Mammary epithelial cell (primary cell): ENCODE measurements at regions of chr13 and their contacts with region 1.

Region 1: DNA sequence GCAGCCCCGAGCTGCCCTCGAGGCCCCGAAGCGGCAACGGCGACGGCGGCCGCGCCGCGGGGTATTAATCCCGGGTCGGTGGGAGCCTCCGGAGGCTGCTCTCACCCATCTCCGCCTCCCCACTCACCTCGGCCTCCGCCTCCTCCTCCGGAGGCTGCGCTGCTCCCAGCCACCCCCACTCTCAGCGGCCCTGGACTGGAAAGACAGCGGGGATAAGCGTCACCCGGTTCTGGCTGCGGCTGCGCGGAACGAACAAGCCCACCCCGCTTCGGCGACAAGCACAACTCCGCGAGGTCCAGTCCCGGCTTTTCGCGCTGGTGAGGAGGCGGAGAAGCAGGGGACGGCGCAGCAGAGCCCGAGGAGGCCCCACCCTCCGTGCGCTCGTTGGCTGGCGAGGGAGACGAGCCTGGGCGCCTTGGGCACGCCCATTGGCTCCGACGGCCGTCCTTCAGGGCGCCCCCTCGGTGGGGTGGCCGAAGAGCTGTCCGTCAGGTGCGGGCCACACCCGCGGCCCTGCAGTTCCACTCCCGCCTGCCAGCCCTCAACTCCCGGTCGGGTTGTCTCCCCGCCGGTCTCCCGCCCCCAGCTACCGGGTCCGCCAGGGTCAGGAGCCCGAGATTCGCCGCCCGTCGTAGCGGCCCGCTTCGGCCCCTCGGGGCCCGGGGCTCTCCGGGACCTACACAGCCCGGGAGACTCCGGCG is at the start of gene ZMYM5:
- DNase-seq: peak; percentile 99
- H3K4me3 ChIP-seq: peak within 1 kb of the TSS; percentile 64 to 75 (median 71)
- H3K27ac ChIP-seq: peak within 1 kb of the TSS; percentile 80
- H3K4me1 ChIP-seq: peaks cover 16% of the 10 kb centered on the region
- H3K27me3 ChIP-seq: no peaks in the 10 kb centered on the region
- CTCF ChIP-seq: no peak
- total RNA-seq, gene ZMYM5: 11.4 to 13.5 TPM

Region 2: GRCh38 chr13:19587635-19588300 is 275.7 kb before region 1 on chr13:
- CTCF ChIA-PET with region 1: no interaction called
- dilution Hi-C with region 1: no loop called
- in situ Hi-C with region 1: no loop called
- intact Hi-C with region 1: no loop called
- DNase-seq: peak; percentile 35
- H3K4me3 ChIP-seq: no peak overlapping the region
- H3K27ac ChIP-seq: no peak overlapping the region
- H3K4me1 ChIP-seq: no peaks in the 10 kb centered on the region
- H3K27me3 ChIP-seq: no peaks in the 10 kb centered on the region
- CTCF ChIP-seq: peak; percentile 29 to 56

Region 3: DNA sequence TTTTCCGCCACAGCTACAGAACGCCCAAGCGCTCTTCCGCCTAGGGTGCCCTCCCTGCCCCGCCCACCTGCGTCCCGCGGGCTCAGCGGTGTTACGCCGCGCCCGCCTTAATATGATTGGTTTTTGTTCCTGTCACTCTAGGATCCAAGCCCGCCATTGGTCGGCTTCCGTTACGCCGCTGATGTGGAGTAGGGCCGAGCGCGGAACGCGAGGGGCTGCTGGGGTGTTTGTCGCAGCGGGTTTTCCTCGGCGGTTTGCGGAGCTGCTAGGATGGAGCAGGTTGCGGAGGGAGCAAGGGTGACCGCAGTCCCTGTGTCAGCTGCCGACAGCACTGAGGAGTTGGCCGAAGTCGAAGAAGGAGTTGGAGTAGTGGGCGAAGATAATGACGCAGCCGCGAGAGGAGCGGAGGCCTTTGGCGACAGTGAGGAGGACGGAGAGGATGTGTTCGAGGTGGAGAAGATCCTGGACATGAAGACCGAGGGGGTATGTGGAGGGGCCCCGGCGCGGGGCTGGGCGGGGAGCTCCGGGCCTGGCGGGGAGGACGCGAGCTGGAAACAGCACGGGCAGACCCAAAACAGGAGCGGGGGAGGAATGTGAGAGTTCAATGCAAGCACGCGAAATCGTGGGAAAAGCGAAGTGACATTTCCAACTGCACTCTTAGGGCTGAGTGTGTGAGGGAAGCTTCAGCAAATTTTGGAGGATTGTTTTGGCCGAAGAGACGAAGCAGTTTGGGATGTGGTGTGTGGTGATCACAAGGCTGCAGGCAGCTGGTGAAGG is 229.8 kb before region 1 on chr13 and contains the start of gene MPHOSPH8:
- CTCF ChIA-PET with region 1: no interaction called
- dilution Hi-C with region 1: no loop called
- in situ Hi-C with region 1: no loop called
- intact Hi-C with region 1: loop called (anchors 2 kb)
- DNase-seq: peak; percentile 95
- H3K4me3 ChIP-seq: peak within 1 kb of the TSS; percentile 55 to 92 (median 75)
- H3K27ac ChIP-seq: peak within 1 kb of the TSS; percentile 33
- H3K4me1 ChIP-seq: no peaks in the 10 kb centered on the region
- H3K27me3 ChIP-seq: no peaks in the 10 kb centered on the region
- CTCF ChIP-seq: no peak
- total RNA-seq, gene MPHOSPH8: 10.0 to 27.3 TPM

Region 4: GRCh38 chr13:19742643-19743042 is 120.8 kb before region 1 on chr13:
- CTCF ChIA-PET with region 1: no interaction called
- dilution Hi-C with region 1: no loop called
- in situ Hi-C with region 1: no loop called
- intact Hi-C with region 1: loop called (anchors 10 kb)
- DNase-seq: no peak
- H3K4me3 ChIP-seq: no peak overlapping the region
- H3K27ac ChIP-seq: no peak overlapping the region
- H3K4me1 ChIP-seq: no peaks in the 10 kb centered on the region
- H3K27me3 ChIP-seq: no peaks in the 10 kb centered on the region
- CTCF ChIP-seq: no peak

Region 5: GRCh38 chr13:19782049-19782726 is 81.3 kb before region 1 on chr13:
- CTCF ChIA-PET with region 1: no interaction called
- dilution Hi-C with region 1: no loop called
- in situ Hi-C with region 1: no loop called
- intact Hi-C with region 1: loop called (anchors 2 kb)
- DNase-seq: peak; percentile 44
- H3K4me3 ChIP-seq: peak overlapping the region; percentile 80 to 98 (median 90)
- H3K27ac ChIP-seq: peak overlapping the region; percentile 92
- H3K4me1 ChIP-seq: peaks cover 3% of the 10 kb centered on the region
- H3K27me3 ChIP-seq: no peaks in the 10 kb centered on the region
- CTCF ChIP-seq: peak in 1 of 2 donors; percentile 6

Region 6: GRCh38 chr13:19822673-19823072 is 40.8 kb before region 1 on chr13:
- CTCF ChIA-PET with region 1: no interaction called
- dilution Hi-C with region 1: no loop called
- in situ Hi-C with region 1: no loop called
- intact Hi-C with region 1: no loop called
- DNase-seq: no peak
- H3K4me3 ChIP-seq: no peak overlapping the region
- H3K27ac ChIP-seq: no peak overlapping the region
- H3K4me1 ChIP-seq: no peaks in the 10 kb centered on the region
- H3K27me3 ChIP-seq: no peaks in the 10 kb centered on the region
- CTCF ChIP-seq: no peak

Region 7: GRCh38 chr13:19959831-19960652 is 96.6 kb after region 1 on chr13:
- CTCF ChIA-PET with region 1: no interaction called
- dilution Hi-C with region 1: no loop called
- in situ Hi-C with region 1: no loop called
- intact Hi-C with region 1: loop called (anchors 1 kb)
- DNase-seq: peak; percentile 84
- H3K4me3 ChIP-seq: peak overlapping the region; percentile 60 to 96 (median 94)
- H3K27ac ChIP-seq: peak overlapping the region; percentile 78
- H3K4me1 ChIP-seq: peaks cover 23% of the 10 kb centered on the region
- H3K27me3 ChIP-seq: no peaks in the 10 kb centered on the region
- CTCF ChIP-seq: peak; percentile 93 to 96

Region 8: DNA sequence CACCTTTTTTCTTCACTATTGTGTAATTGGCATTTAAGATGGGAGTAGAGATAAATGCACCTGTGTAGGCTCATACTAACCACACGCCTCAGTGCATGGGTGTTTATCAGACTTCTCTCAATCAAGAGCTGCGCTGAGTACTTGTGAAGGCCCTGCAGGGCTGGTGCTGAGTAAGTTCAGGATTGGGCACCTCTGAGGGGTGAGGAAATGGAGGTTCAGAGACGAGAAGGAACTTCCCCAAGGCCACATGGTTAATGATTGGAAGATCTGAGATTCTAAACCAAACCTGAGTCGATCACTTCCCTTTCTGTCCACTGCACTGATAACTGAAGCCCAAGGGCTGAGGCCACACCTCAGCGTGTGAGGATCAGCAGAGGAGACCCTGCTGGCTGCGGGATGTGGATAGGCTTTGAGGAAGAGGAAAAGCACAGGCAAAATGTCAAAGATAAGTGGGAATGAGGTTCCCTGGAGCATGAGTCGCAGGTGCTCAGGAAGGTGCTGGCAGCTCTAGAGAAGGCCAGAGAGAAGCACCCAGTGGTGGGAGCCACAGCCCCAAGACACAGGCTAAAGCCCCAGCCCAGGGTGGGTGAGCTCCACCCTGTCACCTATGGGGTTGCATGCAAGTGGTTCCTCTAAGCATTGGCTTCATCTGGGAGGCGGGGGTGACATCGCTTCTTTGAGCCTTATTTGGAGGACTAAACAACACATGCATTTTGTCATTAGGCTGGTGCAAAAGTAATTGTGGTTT is 401.0 kb after region 1 on chr13:
- CTCF ChIA-PET with region 1: no interaction called
- dilution Hi-C with region 1: no loop called
- in situ Hi-C with region 1: no loop called
- intact Hi-C with region 1: no loop called
- DNase-seq: no peak
- H3K4me3 ChIP-seq: no peak overlapping the region
- H3K27ac ChIP-seq: no peak overlapping the region
- H3K4me1 ChIP-seq: peaks cover 10% of the 10 kb centered on the region
- H3K27me3 ChIP-seq: no peaks in the 10 kb centered on the region
- CTCF ChIP-seq: no peak